Left lung (tissue), 14 donors: ENCODE measurements at regions of chr12 and their contacts with region 1.

Region 1: DNA sequence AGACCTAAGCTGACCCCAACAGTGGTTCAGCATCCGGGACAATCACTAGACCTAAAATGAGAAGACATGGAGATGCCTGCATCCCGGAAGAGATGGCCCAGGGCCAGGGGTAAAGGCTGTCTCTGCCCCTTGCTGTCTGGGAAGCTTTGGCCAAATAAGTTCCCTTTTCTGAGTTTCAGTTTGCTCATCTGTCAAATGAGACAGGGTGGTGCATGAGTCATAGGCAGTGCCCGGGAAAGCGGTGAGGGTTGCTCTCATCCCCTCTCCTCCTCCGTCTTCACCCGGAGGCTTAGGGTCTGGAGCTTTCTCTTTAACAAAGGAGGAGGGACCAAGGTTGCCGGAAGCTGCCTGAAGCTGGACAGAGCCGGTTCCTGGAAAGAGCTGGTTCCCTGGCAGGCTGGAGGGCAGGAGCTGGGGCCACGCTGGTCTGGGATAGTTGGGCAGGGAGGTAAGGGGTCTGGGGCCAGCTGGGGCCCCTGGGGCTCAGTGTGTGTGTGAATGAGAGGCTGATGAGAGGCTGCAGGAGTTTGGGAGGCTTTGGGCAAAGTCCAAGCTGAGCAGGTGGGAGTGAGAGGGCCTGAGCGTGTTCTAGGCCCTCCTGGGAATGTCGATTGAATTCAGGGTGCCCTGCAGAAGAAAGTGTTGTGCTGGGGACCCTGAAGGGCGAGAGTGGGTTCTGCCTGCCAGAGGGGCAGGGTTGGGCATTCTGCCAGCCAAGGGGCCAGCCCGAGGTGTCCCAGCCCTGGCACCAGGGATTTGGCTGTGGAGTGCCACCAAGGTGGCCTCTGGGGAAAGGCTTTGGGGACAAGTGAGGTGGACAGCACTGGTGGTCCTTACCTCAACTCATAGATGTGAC is at the start of gene SDSL:
- DNase-seq: peak; percentile 32 to 89 (median 70)
- ATAC-seq: peak; percentile 95
- H3K4me3 ChIP-seq: peak within 1 kb of the TSS; percentile 41 to 59
- H3K27ac ChIP-seq: peak within 1 kb of the TSS; percentile 71 to 78
- H3K4me1 ChIP-seq: peaks cover 8 to 44% of the 10 kb centered on the region in 2 donors
- H3K27me3 ChIP-seq: peaks cover 0 to 3% of the 10 kb centered on the region in 2 donors
- CTCF ChIP-seq: no peak
- polyA plus RNA-seq, gene SDSL: 4.2 to 6.0 (median 4.7) TPM

Region 2: GRCh38 chr12:113196996-113197395 is 225.3 kb before region 1 on chr12:
- intact Hi-C with region 1: loop called in 1 of 2 experiments (anchors 10 kb)
- DNase-seq: peak in 2 of 4 donors; percentile 65 to 68
- ATAC-seq: peak; percentile 91
- H3K4me3 ChIP-seq: no peak overlapping the region
- H3K27ac ChIP-seq: no peak overlapping the region
- H3K4me1 ChIP-seq: peaks cover 0 to 27% of the 10 kb centered on the region in 2 donors
- H3K27me3 ChIP-seq: no peaks in the 10 kb centered on the region
- CTCF ChIP-seq: peak; percentile 59 to 75

Region 3: GRCh38 chr12:113310489-113310888 is 111.8 kb before region 1 on chr12:
- intact Hi-C with region 1: loop called in 1 of 2 experiments (anchors 10 kb)
- DNase-seq: no peak
- ATAC-seq: no peak
- H3K4me3 ChIP-seq: no peak overlapping the region
- H3K27ac ChIP-seq: no peak overlapping the region
- H3K4me1 ChIP-seq: no peaks in the 10 kb centered on the region
- H3K27me3 ChIP-seq: no peaks in the 10 kb centered on the region
- CTCF ChIP-seq: no peak

Region 4: GRCh38 chr12:113720629-113721028 is 298.4 kb after region 1 on chr12:
- intact Hi-C with region 1: no loop called
- DNase-seq: no peak
- ATAC-seq: no peak
- H3K4me3 ChIP-seq: no peak overlapping the region
- H3K27ac ChIP-seq: no peak overlapping the region
- H3K4me1 ChIP-seq: no peaks in the 10 kb centered on the region
- H3K27me3 ChIP-seq: peaks cover 0 to 59% of the 10 kb centered on the region in 2 donors
- CTCF ChIP-seq: no peak